ENCODE measurements at regions of chr5 and their contacts with region 1.

Region 1: DNA sequence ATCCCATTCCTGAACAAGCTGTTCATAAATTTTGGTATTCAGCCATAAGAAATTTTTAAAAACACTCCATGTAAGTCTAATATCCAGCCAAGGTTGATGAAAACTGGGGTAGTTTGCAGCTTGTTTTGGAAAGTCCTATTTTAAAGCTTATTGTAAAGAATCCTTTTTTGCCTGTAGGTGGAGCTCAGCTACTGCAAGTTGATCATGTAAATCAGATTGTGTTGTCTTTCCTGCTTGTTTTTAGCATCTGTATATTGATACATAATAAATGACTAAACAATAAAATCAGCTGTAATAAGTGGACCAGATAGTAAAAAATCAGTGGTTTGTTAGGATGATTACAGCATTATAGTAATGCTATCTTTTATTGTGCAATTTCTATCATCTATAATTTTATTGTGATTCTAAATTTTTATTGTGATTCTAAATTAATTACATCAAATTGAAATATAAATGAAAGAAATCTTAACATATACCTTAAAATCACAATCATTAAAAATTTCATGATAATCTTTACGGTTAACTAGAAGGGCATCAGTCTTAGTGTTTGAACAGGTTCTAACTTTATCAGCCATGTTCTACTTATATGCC is 42.4 kb downstream of the CWC27 start:
- DNase-seq: no peak
- ATAC-seq: no peak
- H3K4me3 ChIP-seq: no peak overlapping the region
- H3K27ac ChIP-seq: no peak overlapping the region
- H3K4me1 ChIP-seq: no peaks in the 10 kb centered on the region
- H3K27me3 ChIP-seq: no peaks in the 10 kb centered on the region
- CTCF ChIP-seq: peak; percentile 15 to 69 (median 57)
- POLR2A ChIP-seq: no peak

Region 2: DNA sequence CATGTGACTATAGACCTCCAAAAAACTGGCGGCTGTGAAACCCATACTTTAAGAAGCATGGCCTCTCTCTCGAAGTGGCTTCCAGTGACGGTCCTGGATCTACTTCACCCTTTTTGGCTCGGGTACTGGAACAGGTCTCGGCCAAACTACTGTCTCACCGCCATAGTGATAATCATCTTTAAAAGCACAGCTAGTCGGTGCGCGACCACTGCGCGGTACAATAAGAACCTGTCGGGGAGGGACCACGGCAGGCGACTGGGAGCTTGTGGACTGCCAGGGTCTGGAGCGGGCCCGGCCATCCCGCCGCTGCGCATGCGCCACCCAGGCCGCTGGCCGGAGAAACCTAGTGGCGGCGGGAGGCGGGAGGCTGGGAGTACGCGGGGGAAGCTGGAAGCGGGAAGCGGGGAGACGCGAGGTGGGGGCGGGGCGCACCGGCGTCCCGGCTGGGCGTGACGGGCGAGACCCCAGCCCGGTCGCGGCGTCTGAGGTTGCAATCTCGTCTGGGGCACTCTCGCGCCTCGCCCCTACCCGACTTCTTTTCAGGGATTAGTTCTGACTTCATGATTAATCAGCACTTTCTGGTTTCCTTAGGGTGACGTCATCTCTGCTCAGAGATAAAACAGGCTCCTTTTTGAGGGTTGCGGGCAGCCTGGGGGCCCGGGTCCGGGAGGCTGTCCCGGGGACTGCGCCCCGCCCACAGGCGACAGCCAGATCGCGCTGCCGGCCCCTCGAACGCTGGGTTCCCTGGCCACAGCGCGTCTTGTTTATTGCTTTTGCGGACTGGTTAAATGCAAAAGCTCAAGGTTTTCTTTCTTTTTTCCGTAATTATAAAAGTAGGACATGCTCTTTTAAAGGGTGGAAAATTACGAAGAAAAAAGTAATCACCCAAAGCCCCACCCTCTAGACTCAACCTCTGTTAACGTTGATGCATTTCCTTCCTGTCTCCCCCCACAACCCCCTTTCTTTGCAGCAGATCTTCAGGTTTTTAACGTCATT is 224.4 kb after region 1 on chr5:
- in situ Hi-C with region 1: loop called in 1 of 4 experiments (anchors 25 kb)
- intact Hi-C with region 1: loop called (anchors 2 kb)
- DNase-seq: peak; percentile 71 to 83
- ATAC-seq: peak; percentile 90 to 91
- H3K4me3 ChIP-seq: peak overlapping the region; percentile 71 to 84 (median 78)
- H3K27ac ChIP-seq: peak overlapping the region; percentile 78 to 87 (median 86)
- H3K4me1 ChIP-seq: peaks cover 6 to 10% of the 10 kb centered on the region in 2 donors
- H3K27me3 ChIP-seq: no peaks in the 10 kb centered on the region
- CTCF ChIP-seq: peak in 2 of 5 experiments; percentile 28 to 29
- POLR2A ChIP-seq: peak; percentile 27 to 40

Region 3: DNA sequence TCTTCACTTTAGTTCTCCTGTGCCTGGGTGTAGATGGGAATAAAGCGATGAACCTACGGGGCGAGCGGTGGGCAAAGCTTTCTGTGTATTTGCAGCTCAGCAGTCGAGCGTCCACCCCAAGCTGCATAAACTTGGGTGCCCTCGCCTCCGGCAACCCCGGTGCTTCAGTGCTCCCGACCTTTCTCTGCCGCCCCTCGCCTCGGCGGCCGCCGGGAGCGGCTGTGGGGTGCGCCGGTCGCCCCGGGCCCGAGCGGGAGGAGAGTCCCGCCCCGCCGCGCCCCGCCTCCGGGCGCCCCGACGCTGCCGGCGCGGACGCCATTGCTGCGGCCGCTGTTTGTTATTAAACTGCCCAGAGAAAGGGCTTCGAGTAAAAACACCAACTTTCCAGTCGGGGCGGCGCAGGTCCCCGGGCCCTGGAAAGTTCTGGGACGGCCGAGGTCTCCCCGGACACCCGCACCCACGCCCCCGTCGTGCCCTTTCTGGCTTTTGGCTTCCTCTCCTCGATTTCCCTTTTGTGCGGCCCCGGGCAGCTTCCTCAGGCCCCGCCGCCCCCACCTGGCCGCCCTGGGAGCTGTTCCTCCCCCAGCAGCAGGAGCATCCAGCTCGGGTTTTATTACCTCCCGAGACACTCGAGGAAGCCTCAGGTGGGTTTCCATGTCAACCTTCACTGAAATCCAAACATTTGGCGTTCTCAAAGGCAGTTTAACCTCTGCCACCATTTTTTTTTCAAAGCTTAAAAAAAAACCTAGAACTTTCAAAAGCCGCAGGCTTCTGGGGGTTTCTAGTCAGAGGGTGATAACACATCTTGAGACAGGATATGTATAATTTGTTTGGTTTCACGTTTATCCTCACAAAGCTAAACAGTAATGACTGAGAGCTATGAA is 291.9 kb after region 1 on chr5:
- in situ Hi-C with region 1: no loop called
- intact Hi-C with region 1: loop called (anchors 2 kb)
- DNase-seq: peak in 1 of 2 donors; percentile 15
- ATAC-seq: peak; percentile 48 to 57
- H3K4me3 ChIP-seq: peak overlapping the region; percentile 62 to 70 (median 65)
- H3K27ac ChIP-seq: peak overlapping the region; percentile 61 to 76 (median 68)
- H3K4me1 ChIP-seq: no peaks in the 10 kb centered on the region
- H3K27me3 ChIP-seq: no peaks in the 10 kb centered on the region
- CTCF ChIP-seq: peak in 4 of 5 experiments; percentile 11 to 50 (median 32)
- POLR2A ChIP-seq: no peak